Aorta (tissue), 5 donors: ENCODE measurements at regions of chr6 and their contacts with region 1.

Region 1: DNA sequence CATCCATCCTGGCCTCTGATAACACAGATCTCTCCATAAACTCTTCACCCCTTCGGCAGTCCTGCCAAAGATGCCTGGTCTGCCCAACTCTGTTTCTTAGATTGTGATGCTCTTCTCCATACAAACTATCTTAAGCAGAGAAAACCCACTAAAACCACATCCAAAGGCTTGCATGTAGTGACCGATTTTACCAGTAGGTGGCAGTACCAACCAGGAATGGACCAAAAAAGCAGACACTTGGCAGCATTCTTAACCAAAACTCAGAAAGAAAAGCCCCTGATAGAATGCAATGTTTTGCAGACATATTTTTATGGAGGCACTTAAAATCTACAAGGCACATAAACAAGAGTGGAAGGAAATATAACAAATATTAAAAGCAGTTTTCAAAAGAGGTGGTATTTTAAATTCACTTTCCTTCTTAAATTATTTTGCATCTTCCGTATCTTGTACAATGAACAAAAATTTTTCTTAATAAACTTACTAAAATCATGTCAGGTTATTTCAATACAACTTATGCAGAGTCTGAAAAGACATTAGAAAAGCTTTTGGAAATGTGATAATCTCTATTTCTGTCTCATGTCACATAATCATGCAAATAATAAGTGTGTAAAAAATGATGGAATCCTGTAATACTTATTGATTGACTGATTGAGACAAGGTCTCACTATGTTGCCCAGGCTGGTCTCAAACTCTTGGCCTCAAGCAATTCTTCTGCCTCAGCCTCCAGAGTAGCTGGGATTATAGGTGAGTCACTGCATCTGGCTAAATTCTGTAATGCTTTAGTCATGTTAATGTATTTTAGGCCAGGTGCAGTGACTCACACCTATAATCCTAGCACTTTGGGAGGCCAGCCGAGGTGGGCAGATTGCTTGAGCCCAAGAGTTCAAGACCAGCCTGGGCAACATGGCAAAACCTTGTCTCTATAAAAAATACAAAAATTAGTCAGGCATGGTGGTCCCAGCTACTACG is 29.4 kb downstream of the LRP11 start:
- DNase-seq: peak in 1 of 2 donors; percentile 57
- ATAC-seq: peak; percentile 79
- H3K4me3 ChIP-seq: no peak overlapping the region
- H3K27ac ChIP-seq: no peak overlapping the region
- H3K4me1 ChIP-seq: no peaks in the 10 kb centered on the region
- H3K27me3 ChIP-seq: no peaks in the 10 kb centered on the region

Region 2: DNA sequence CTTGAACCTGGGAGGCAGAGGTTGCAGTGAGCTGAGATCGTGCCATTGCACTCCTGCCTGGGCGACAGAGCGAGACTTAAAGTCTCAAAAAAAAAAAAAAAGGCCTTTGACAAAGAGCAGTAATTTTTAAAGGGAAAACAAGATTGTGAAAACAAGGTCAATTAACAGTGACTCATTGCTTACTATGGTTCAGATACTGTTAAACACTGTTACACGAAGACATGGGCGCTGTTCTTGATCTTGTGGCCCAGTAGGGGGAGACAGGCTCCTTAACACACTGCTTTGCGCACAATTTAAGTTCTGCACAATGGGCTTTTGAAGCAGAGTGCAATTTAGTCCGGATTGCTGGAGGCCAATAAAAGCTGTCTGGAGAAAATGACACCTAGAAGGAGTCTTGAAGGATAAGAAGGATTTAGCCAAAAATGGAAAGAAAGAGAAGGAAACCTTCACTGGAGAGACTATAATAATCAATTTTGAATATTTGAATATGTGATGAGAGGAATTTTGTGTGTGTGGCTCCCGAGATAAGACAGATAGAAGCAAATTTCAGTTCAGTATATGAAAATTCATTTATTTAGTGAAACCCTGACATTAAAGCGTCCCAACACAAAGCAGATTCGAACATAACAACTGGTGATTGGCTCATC is 110.9 kb before region 1 on chr6:
- intact Hi-C with region 1: no loop called
- DNase-seq: no peak
- ATAC-seq: peak; percentile 76
- H3K4me3 ChIP-seq: no peak overlapping the region
- H3K27ac ChIP-seq: no peak overlapping the region
- H3K4me1 ChIP-seq: no peaks in the 10 kb centered on the region
- H3K27me3 ChIP-seq: no peaks in the 10 kb centered on the region

Region 3: GRCh38 chr6:149863697-149864577 is 29.1 kb after region 1 on chr6 and contains the start of gene LRP11:
- intact Hi-C with region 1: loop called (anchors 2 to 5 kb)
- DNase-seq: peak; percentile 86 to 92
- ATAC-seq: peak; percentile 95
- H3K4me3 ChIP-seq: peak within 1 kb of the TSS; percentile 74 to 82
- H3K27ac ChIP-seq: peak within 1 kb of the TSS; percentile 49 to 74
- H3K4me1 ChIP-seq: no peaks in the 10 kb centered on the region
- H3K27me3 ChIP-seq: no peaks in the 10 kb centered on the region
- total RNA-seq, gene LRP11: 24.4 to 35.3 TPM

Region 4: DNA sequence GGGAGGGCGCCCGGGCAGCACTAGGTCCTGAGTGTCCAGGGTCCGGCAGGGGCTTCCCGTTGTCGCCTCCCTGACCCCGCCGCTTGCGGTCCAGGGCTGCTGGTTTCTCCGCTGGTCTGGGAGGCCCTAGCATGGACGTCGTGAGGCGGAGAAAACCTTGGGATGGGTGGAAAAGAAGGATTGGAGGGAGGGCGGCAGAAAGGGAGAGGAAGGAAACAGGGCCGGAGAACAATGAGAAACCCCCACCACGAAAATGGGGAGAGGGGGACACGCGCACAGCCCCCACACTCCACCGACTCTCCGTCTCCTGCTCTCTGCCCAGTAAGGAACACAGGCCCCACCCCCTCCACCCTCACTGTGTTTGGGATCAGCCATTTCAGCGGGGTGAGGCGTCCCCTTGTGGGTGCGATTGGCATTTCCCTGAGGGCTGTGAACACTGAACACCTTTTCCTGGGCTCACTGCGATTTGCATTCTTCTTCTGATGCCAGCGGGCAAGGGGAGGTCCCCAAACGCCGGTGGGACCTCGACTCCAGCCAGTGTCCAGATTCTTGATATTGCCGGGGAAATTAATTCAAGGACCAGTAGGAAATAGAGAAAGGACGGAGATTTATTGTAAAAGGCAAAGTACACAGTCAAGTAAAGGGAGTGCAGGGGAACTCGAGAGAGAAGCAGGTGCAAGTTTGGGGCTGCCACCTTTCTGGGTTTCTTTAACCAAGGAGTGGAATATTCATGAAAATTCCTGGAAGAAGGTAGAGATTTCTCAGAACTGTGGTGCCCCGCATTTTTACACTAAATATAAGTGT is 91.4 kb after region 1 on chr6:
- intact Hi-C with region 1: loop called (anchors 1 to 2 kb)
- DNase-seq: peak; percentile 94 to 97
- ATAC-seq: peak; percentile 93
- H3K4me3 ChIP-seq: peak overlapping the region; percentile 0 to 36
- H3K27ac ChIP-seq: no peak overlapping the region
- H3K4me1 ChIP-seq: no peaks in the 10 kb centered on the region
- H3K27me3 ChIP-seq: no peaks in the 10 kb centered on the region

Region 5: DNA sequence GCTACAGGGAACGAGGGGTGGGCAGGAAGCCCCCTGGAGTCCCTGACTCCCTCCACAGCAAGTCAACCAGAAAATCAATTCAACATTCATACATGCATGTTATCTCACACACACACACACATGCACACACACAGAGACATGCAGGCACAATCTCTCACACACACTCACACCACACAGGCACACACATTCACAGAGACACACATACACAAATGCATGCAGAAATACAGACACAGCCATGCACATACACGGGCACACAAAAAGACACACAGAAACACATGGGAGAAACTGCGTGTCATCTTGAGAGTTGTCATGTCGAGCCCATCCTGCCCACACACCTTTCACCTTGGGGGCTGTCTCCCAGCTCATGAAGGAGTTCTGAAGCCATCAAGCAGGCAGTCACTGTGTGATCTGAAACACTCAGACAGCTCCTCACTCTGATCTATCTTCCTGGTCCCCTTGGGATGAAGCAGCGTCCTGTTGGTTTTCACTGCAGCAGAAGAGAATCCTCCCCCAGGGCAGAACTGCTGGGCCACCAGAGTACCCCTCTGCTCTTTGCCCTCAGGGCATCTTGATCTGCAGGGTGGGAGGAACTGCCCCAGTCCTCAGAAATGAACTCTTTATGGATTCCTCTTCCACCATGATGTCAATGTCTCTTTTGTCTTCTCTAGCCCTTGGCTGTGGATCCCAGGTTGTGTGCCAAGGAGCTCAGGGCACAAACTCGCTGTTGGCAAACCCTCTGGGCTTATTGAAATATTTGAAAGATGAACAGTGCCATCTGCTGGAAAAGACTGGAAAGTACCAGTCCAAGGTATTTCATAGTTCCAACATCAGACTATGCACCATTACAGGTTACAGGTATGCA is 181.8 kb after region 1 on chr6:
- intact Hi-C with region 1: loop called in 1 of 2 experiments (anchors 5 kb)
- DNase-seq: no peak
- ATAC-seq: peak; percentile 73
- H3K4me3 ChIP-seq: no peak overlapping the region
- H3K27ac ChIP-seq: no peak overlapping the region
- H3K4me1 ChIP-seq: no peaks in the 10 kb centered on the region
- H3K27me3 ChIP-seq: no peaks in the 10 kb centered on the region